Common myeloid progenitor, CD34-positive (primary cell): ENCODE measurements at regions of chr12 and their contacts with region 1.

Region 1: GRCh38 chr12:401235-402028 is at the start of gene CCDC77:
- DNase-seq: peak; percentile 92 to 96 (median 96)
- H3K4me3 ChIP-seq: peak within 1 kb of the TSS; percentile 81 to 100 (median 94)
- H3K27ac ChIP-seq: peak within 1 kb of the TSS; percentile 55 to 76
- H3K4me1 ChIP-seq: peaks cover 4 to 14% (median 10%) of the 10 kb centered on the region in 4 experiments
- H3K27me3 ChIP-seq: no peaks in the 10 kb centered on the region

Region 2: DNA sequence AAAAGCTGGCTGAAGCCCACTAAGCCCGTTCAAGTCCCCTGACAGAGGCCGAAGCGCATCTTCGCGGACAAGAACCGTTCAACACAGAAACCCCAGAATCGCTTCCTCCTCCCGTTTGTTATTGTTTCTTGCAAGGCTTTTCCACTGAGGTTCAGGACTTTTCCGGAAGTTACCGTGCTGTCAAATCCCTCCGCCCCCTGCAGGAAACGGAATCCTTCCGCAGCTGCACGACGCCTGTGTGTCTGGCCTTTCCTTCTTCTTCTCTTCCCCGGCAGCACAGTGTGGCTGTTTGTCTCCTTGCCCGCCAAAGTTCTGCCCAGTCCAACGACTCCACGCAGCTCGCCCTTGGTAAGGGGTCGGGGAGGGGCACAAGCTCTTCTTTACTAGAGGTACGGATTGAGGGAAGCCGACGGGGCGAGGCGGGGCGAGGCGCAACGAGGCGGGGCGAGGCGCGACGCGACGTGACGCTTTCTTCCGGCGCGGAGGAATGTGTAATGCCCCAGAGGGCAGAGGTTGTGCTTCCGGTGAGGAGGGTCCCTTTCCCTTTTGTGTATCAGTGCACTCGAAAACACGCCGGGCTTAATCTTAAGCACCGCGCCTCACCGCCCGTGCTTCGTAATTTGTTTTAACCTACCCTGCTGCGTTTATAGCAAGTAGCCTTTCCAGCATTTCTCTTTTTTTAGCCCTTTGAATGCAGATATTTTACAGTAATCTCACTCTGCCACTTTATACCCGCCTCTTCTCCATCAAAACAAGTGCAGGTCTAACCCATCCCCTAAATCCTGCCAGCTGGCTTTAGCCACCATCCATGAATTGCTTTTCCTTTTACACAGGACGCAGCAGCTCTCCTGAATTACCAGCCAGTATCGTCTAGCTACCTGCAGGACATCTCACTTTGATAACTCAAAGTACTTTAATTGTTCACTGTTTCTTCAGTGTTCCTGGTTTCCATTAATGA is 12.0 kb before region 1 on chr12 and contains the start of gene KDM5A:
- CTCF ChIA-PET with region 1: interaction called, 12 read pairs
- POLR2A ChIA-PET with region 1: interaction called, 9 read pairs
- DNase-seq: peak; percentile 95 to 97 (median 96)
- H3K4me3 ChIP-seq: peak within 1 kb of the TSS; percentile 72 to 100 (median 96)
- H3K27ac ChIP-seq: peak within 1 kb of the TSS; percentile 97 to 98
- H3K4me1 ChIP-seq: peaks cover 21 to 32% (median 25%) of the 10 kb centered on the region in 4 experiments
- H3K27me3 ChIP-seq: no peaks in the 10 kb centered on the region

Region 3: DNA sequence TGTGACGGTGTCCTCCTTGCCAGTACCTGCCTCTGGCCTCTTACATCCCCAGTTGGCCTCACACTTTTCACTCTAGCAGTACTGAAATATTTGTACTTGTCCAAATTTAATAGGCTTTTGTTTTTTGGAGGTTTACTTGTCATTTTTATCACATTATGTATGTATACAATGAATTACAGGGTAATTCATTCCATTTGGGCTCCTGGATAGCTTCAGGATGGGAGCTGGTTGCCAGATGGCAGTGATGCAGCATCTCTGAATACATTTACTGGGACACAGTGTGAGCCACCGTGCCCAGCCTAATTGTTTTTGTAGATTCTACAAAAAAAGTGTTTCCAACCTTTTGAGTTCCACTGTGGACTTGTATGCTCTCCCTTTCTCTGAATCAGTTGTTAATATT is 13.4 kb after region 1 on chr12:
- CTCF ChIA-PET with region 1: interaction called, 4 read pairs
- POLR2A ChIA-PET with region 1: interaction called, 11 read pairs
- DNase-seq: no peak
- H3K4me3 ChIP-seq: no peak overlapping the region
- H3K27ac ChIP-seq: no peak overlapping the region
- H3K4me1 ChIP-seq: no peaks in the 10 kb centered on the region
- H3K27me3 ChIP-seq: no peaks in the 10 kb centered on the region

Region 4: DNA sequence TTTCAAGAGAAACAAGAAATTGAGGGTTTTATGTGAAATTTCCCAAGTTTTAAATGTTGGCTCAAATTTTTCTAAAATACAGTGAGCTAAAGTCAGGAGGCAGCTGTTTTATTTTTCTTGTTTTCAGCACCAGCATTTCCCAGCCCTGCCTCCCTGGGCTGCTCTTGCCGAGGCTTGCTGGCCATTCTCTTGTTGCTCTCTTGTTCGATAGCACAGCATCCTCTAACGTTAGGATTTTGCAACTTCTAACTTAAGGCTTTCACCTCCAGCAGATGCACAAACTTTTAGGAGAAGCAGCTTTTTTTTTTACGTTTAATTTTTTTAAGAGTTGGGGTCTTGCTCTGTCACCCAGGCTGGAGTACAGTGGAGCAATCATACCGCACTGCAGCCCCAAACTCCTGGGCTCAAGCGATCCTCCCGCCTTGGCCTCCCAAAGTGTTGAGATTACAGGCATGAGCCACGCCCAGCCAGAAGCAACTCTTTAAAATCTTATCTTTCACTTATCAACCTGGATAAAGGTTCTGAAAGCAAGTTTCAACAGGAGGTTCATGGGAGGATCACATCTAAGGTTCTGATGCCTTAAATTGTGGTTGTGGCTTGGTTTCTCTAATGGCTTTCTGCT is 98.5 kb after region 1 on chr12:
- CTCF ChIA-PET with region 1: no interaction called
- POLR2A ChIA-PET with region 1: no interaction called
- DNase-seq: no peak
- H3K4me3 ChIP-seq: no peak overlapping the region
- H3K27ac ChIP-seq: no peak overlapping the region
- H3K4me1 ChIP-seq: peaks cover 0 to 10% (median 7%) of the 10 kb centered on the region in 4 experiments
- H3K27me3 ChIP-seq: peaks cover 0 to 4% (median 0%) of the 10 kb centered on the region in 5 experiments